ENCODE measurements at regions of chr2 and their contacts with region 1.

Region 1: DNA sequence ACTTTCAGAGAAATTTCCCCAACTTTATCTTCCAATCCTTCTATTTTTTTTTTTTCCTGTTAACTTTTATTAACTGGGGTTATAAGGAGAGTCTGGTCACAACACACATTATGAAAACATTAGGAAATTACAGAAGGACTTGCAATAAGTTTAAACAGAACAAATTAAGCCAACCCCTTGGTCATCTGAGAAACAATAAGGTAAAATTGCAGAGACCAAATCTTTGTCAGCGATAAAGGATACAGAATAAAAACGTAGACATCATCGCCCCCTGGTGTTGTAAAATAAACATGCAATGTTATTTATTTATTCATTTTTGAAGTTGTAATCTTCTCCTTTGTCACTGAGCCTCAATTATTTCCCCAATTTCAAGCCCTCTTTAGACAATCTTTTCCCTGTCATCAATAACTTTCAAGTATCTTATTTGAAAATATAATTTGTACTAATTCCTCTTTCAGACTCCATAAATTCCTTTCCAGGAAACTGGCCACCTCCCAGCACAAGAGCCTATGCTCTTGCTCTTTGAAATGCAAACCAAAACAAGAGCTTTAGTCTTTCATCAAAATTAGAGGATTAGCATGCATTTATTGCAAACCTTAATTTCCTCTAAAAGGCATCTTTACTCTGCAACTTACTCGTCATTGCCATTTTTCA is 19.5 kb downstream of the G6PC2 start:
- DNase-seq: no peak
- H3K4me3 Mint-ChIP-seq: no peak overlapping the region
- H3K27ac Mint-ChIP-seq: no peak overlapping the region
- H3K4me1 Mint-ChIP-seq: peaks cover 7% of the 10 kb centered on the region
- H3K27me3 Mint-ChIP-seq: peaks cover 19% of the 10 kb centered on the region

Region 2: DNA sequence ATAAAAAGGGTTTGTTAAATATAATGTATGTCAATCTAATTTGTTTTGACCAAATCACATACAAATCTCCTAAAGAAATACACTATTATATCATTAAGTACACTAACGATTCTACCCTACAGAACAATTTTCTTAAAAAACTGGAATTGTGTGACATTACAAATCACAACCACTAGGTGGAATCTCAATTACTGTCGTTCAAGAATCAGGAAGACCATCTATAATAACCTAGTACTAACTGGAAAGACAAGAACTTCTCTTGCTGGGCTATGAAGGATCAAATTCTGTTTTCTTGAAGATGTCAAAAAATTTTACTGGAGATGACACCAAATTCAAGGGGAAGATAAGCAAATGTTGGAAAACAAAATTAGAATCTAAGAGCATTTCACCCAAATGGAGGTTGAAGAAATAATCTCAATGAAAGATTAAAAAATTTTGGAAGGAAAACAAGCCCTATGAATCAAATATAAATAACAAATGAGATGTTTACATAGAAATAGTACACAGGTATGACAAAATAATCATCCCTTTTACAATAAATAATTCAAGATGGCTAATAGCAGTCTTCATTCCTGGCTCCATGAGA is 784.1 kb before region 1 on chr2:
- intact Hi-C with region 1: loop called (anchors 5 kb)
- DNase-seq: no peak
- H3K4me3 Mint-ChIP-seq: no peak overlapping the region
- H3K27ac Mint-ChIP-seq: no peak overlapping the region
- H3K4me1 Mint-ChIP-seq: peaks cover 20% of the 10 kb centered on the region
- H3K27me3 Mint-ChIP-seq: no peaks in the 10 kb centered on the region

Region 3: GRCh38 chr2:168663993-168664392 is 256.6 kb before region 1 on chr2:
- intact Hi-C with region 1: no loop called
- DNase-seq: no peak
- H3K4me3 Mint-ChIP-seq: no peak overlapping the region
- H3K27ac Mint-ChIP-seq: no peak overlapping the region
- H3K4me1 Mint-ChIP-seq: peaks cover 23% of the 10 kb centered on the region
- H3K27me3 Mint-ChIP-seq: no peaks in the 10 kb centered on the region

Region 4: DNA sequence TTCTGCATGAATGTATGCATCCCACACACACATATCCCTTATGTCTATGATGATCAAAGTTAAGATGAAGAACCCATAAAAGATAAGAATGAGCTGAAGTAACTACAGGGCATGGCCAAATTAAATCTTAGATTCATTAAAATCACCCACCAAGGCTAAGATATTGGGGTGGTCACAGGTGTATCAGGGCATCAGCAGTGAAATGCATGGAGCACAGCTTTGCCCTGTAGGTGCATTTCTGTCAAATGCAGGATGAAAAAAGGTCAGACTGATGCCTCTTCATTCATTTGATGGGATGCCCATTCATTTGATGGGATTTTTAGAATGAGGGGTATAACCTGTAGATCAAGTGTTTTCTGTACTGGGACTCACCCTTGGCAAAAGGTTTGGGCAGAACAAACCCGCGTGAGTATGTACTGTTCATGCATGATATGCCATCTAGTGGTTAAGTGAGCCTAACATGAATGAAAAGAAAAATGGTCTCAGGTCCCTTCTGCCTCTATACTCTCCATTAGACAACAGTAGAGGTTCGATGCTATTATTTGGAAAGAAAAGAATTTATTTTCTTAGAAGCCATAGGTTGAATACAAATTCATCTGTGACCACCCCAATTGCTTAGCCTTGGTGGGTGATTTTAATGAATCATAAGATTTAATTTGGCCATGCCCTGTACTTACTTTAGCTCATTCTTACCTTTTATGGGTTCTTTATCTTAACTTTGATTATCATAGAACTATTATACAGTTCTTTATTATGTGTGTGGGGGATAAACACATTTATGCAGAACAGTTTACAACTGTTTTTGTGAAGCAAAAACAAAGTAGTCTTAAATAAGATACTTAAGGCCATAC is 161.4 kb before region 1 on chr2:
- intact Hi-C with region 1: loop called (anchors 1 kb)
- DNase-seq: no peak
- H3K4me3 Mint-ChIP-seq: no peak overlapping the region
- H3K27ac Mint-ChIP-seq: no peak overlapping the region
- H3K4me1 Mint-ChIP-seq: peaks cover 15% of the 10 kb centered on the region
- H3K27me3 Mint-ChIP-seq: no peaks in the 10 kb centered on the region

Region 5: GRCh38 chr2:168773719-168774521 is 146.7 kb before region 1 on chr2:
- intact Hi-C with region 1: loop called (anchors 1 kb)
- DNase-seq: peak; percentile 7
- H3K4me3 Mint-ChIP-seq: no peak overlapping the region
- H3K27ac Mint-ChIP-seq: no peak overlapping the region
- H3K4me1 Mint-ChIP-seq: no peaks in the 10 kb centered on the region
- H3K27me3 Mint-ChIP-seq: no peaks in the 10 kb centered on the region